ENCODE measurements at regions of chr4 and their contacts with region 1.

Region 1: DNA sequence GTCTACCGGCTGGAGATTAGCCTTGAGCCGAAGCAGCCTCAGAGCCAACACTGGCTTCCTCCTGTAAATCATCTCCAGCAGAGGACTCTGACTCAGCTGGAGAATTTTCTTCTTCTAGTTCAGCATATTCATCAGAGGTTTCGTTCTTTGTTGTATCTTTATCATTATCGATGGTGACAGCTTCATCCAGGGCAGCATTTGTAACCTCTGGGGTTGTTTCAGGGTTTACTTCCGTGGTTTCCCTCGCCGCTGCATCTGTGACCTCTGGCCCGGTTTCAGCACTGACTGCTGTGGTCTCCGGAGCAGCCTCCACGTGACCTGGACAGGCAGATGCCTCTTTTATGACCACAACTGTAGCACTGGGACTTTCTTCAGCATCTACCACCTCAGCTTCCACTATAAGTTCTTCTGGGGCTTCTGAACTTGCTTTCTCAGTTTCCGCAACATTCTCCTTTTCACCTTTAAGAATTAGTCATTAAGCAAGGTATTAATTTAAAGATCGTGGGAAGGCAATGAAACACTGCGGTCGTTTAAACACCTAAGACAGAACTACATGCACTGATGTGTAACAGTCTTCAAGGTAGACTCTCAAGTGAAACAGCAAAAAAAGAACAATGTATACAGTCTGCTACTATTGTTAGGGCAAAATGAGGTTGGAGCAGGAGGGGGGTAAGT is 13.3 kb downstream of the MGARP start:
- DNase-seq: peak; percentile 43
- ATAC-seq: peak; percentile 96
- H3K4me3 Mint-ChIP-seq: peak overlapping the region; percentile 72
- H3K27ac Mint-ChIP-seq: peak overlapping the region; percentile 72
- H3K4me1 Mint-ChIP-seq: peaks cover 13% of the 10 kb centered on the region
- H3K27me3 Mint-ChIP-seq: peaks cover 2% of the 10 kb centered on the region
- CTCF ChIP-seq: no peak

Region 2: DNA sequence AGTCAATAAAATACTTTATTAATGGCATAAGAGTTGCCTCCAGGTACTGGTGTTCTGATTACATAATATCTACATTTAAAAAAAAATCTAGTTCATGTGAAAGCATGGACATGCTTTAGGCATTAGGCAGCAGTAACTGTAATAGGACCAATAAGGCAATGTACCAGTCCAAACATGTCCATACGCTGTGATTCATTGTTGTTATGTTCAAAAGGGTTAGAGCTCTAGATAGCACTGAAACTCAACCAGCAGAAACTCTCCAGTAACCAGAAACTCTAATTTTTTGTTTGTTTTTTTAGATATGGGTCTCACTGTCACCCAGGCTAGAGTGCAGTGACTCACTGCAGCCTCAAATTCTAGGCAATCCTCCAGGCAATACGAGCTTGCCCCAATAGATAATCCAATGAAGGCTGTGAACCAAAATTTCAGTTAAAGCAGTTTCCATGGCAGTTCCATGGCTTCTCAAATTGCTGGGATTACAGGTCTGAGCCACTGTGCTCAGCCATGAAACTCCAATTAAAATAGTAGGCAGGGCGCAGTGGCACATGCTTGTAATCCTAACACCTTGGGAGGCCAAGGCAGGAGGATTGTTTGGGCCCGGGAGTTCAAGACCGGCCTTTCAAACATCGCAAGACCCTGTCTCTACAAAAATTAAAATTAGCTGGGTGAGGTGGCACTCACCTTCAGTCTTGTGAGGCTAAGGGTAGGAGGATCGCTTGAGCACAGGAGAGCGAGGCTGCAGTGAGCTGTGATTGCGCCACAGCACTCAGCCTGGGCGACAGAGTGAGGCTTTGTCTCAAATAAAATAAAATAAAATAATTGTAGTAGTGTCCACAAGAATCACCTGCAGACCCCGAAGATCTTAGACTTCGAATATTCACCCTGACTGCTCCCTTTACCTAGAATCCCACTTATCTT is 23.0 kb before region 1 on chr4:
- CTCF ChIA-PET with region 1: no interaction called
- POLR2A ChIA-PET with region 1: interaction called, 3 read pairs
- intact Hi-C with region 1: loop called (anchors 2 kb)
- DNase-seq: no peak
- ATAC-seq: no peak
- H3K4me3 Mint-ChIP-seq: no peak overlapping the region
- H3K27ac Mint-ChIP-seq: no peak overlapping the region
- H3K4me1 Mint-ChIP-seq: peaks cover 9% of the 10 kb centered on the region
- H3K27me3 Mint-ChIP-seq: peaks cover 2% of the 10 kb centered on the region
- CTCF ChIP-seq: no peak

Region 3: GRCh38 chr4:139253713-139254112 is 13.0 kb before region 1 on chr4:
- CTCF ChIA-PET with region 1: interaction called, 3 read pairs
- POLR2A ChIA-PET with region 1: interaction called, 10 read pairs
- intact Hi-C with region 1: no loop called
- DNase-seq: no peak
- ATAC-seq: no peak
- H3K4me3 Mint-ChIP-seq: no peak overlapping the region
- H3K27ac Mint-ChIP-seq: no peak overlapping the region
- H3K4me1 Mint-ChIP-seq: peaks cover 4% of the 10 kb centered on the region
- H3K27me3 Mint-ChIP-seq: no peaks in the 10 kb centered on the region
- CTCF ChIP-seq: no peak

Region 4: DNA sequence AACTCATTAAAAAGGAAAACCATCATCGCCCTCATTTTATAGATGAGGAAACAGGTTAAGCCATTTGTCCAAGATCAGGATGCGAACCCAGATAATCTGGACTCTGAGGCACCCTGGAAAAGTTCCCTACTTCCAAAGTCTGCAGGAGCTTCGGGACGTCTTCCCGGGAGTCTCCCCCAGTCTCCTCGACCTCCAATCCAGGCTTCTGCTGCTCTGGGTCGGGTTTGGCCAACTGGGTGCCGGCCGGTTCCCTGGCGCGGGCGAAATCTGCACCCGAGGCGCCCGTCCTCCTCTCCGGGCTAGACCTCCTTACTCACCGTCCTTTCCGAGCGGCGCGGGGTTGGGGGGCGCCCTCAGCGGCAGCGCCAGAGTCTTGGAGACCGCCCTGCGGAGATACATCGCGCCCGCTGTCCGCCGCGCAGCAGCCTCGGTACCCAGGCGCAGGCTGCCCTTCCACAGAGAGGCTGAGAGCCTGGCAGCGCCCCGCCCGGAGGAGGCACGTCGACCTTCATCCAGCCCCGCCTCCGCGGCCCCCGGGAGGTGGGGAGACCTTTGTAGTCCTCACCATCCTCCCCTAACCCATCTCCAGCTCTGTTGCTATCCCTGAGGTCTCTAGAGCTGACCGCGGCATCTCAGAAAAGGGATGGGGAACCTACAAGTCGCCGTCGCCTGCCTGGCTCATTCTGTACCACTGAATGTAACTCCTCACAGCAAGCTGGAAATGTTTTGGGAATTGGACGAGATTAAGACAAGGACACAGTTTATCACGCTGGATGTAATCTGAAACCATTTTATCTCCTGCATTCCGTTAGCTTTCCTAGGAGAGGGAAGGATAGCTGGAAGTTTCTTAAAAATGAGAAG is 13.3 kb after region 1 on chr4 and contains the start of gene MGARP:
- CTCF ChIA-PET with region 1: no interaction called
- POLR2A ChIA-PET with region 1: interaction called, 3 read pairs
- intact Hi-C with region 1: loop called (anchors 1 kb)
- DNase-seq: peak; percentile 36
- ATAC-seq: peak; percentile 68
- H3K4me3 Mint-ChIP-seq: peak within 1 kb of the TSS; percentile 79
- H3K27ac Mint-ChIP-seq: no peak within 1 kb of the TSS
- H3K4me1 Mint-ChIP-seq: peaks cover 20% of the 10 kb centered on the region
- H3K27me3 Mint-ChIP-seq: peaks cover 32% of the 10 kb centered on the region
- CTCF ChIP-seq: no peak
- total RNA-seq, gene MGARP: not detected in 2 replicates